ENCODE measurements at regions of chr11 and their contacts with region 1.

Region 1: GRCh38 chr11:61792310-61793085 is at the starts of genes FEN1 and TMEM258:
- DNase-seq: peak; percentile 86
- H3K4me3 Mint-ChIP-seq: peak within 1 kb of the TSS; percentile 96
- H3K27ac Mint-ChIP-seq: peak within 1 kb of the TSS; percentile 99
- H3K4me1 Mint-ChIP-seq: peaks cover 58% of the 10 kb centered on the region
- H3K27me3 Mint-ChIP-seq: no peaks in the 10 kb centered on the region
- total RNA-seq, gene FEN1: 147 and 149 TPM in 2 replicates
- total RNA-seq, gene TMEM258: 164 and 166 TPM in 2 replicates

Region 2: GRCh38 chr11:61361686-61362541 is 430.6 kb before region 1 on chr11 and contains the starts of genes CYB561A3 and TMEM138:
- intact Hi-C with region 1: loop called (anchors 1 kb)
- DNase-seq: peak; percentile 90
- H3K4me3 Mint-ChIP-seq: peak within 1 kb of the TSS; percentile 98
- H3K27ac Mint-ChIP-seq: peak within 1 kb of the TSS; percentile 95
- H3K4me1 Mint-ChIP-seq: peaks cover 45% of the 10 kb centered on the region
- H3K27me3 Mint-ChIP-seq: no peaks in the 10 kb centered on the region
- total RNA-seq, gene CYB561A3: 38.1 and 42.3 TPM in 2 replicates
- total RNA-seq, gene TMEM138: 68.4 and 71.7 TPM in 2 replicates

Region 3: GRCh38 chr11:61752117-61752924 is 40.2 kb before region 1 on chr11 and contains the start of gene MYRF:
- intact Hi-C with region 1: loop called (anchors 5 kb)
- DNase-seq: peak; percentile 52
- H3K4me3 Mint-ChIP-seq: peak within 1 kb of the TSS; percentile 76
- H3K27ac Mint-ChIP-seq: no peak within 1 kb of the TSS
- H3K4me1 Mint-ChIP-seq: no peaks in the 10 kb centered on the region
- H3K27me3 Mint-ChIP-seq: peaks cover 31% of the 10 kb centered on the region
- total RNA-seq, gene MYRF: 0.78 and 0.99 TPM in 2 replicates

Region 4: GRCh38 chr11:61834278-61835048 is 42.0 kb after region 1 on chr11:
- intact Hi-C with region 1: loop called (anchors 1 kb)
- DNase-seq: peak; percentile 72
- H3K4me3 Mint-ChIP-seq: peak overlapping the region; percentile 73
- H3K27ac Mint-ChIP-seq: peak overlapping the region; percentile 96
- H3K4me1 Mint-ChIP-seq: peaks cover 76% of the 10 kb centered on the region
- H3K27me3 Mint-ChIP-seq: no peaks in the 10 kb centered on the region

Region 5: DNA sequence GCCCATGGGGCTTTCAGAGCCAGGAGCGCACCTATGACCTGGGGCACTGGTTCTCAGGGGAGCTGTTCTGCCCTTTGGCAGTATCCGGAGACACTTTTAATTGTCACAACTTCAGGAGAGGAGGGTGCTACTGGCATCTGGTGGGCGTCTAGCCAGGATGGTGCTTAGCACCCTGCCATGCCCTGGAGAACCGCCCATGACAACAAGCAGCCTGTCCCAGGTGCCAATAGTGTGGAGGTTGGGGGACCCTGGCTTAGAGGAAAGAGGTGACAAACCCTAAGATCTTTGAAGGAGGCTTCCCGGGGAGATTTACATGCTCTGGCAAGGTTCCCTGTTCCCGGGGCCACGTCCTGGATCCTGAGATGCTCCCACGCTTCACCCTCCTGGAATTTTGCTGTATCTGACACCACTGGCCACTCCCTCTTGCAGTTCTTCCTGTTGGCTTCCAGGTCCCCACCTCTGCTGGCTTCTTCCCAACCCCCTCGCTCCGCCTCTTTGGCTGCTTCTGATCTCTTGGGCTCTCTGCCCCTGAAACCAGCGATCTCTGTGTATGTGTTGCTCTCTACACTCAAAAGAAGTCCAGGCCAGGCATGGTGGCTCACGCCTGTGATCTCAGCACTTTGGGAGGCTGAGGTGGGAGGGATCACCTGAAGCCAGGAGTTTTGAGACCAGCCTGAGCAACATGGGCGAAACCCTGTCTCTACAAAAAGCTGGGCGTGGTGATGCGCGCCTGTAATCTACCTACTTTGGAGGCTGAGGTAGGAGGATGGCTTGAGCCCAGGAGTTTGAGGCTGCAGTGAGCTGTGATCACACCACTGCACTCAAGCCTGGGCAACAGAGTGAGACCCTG is 67.8 kb after region 1 on chr11:
- intact Hi-C with region 1: no loop called
- DNase-seq: no peak
- H3K4me3 Mint-ChIP-seq: no peak overlapping the region
- H3K27ac Mint-ChIP-seq: no peak overlapping the region
- H3K4me1 Mint-ChIP-seq: no peaks in the 10 kb centered on the region
- H3K27me3 Mint-ChIP-seq: no peaks in the 10 kb centered on the region

Region 6: GRCh38 chr11:61899146-61899841 is 106.8 kb after region 1 on chr11:
- intact Hi-C with region 1: loop called (anchors 1 kb)
- DNase-seq: peak; percentile 86
- H3K4me3 Mint-ChIP-seq: no peak overlapping the region
- H3K27ac Mint-ChIP-seq: no peak overlapping the region
- H3K4me1 Mint-ChIP-seq: peaks cover 5% of the 10 kb centered on the region
- H3K27me3 Mint-ChIP-seq: peaks cover 4% of the 10 kb centered on the region

Region 7: DNA sequence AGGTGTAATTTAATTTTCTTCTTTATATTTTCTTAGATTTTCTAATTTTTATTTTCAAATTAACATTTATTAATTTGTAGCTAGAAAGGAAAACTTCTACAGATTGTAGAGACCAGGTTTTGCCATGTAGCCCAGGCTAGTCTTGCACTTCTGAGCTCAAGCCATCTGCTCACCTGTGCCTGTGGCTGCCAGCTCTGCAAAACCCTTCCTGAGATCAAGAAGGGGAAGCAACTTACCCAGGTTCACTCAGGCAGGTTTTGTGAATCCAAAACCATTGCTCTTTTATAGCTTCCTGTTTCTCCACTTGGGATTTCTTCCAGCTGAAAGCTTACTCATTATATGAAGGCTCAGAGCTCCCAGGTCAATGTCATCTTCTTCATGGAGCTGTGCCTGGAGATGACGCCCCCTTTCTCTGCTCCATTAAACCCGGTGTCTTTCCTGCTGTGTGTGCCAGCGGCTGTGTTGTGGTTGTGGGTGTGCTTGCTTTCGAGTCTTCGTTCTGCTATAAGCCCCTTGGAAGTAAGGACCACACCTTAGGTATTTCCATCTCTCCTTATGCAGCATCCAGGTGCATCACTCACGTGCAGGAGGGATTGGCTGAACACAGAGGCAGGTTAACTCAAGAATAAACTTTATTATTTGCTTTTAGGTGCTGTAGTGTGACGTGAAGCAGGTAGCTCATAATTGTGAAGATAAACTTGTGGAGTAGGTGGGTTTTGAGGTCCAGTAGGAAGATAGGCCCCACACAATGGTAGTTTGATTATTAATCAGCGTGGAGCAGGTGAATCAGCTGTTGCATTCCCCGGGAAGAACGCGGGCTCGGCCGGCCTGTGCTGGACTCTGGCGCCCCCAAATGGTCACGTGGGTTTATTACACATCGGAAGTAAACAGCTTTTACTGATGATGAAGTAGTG is 289.1 kb after region 1 on chr11:
- intact Hi-C with region 1: loop called (anchors 1 kb)
- DNase-seq: peak; percentile 61
- H3K4me3 Mint-ChIP-seq: no peak overlapping the region
- H3K27ac Mint-ChIP-seq: no peak overlapping the region
- H3K4me1 Mint-ChIP-seq: peaks cover 7% of the 10 kb centered on the region
- H3K27me3 Mint-ChIP-seq: no peaks in the 10 kb centered on the region

Measured in activated T-helper 1 cell treated with anti-CD3 and anti-CD28 coated beads, Interleukin-12 subunit alpha, Interleukin-12 subunit beta, Interleukin-2, Interleukin-4 antibody, amounts not matched to agents 30 ng/mL and 10 ng/mL and 1 ng/mL, durations not matched to agents 14 hours and 24 hours and 36 hours (primary cell).